ENCODE measurements at regions of chr19 and their contacts with region 1.

Region 1: GRCh38 chr19:10580979-10581631 is 6.0 kb downstream of the AP1M2 start:
- DNase-seq: no peak
- ATAC-seq: peak; percentile 96
- H3K4me3 ChIP-seq: no peak overlapping the region
- H3K27ac ChIP-seq: no peak overlapping the region
- H3K4me1 ChIP-seq: peaks cover 2% of the 10 kb centered on the region; the same call in 1 of the 2 replicates
- H3K27me3 ChIP-seq: no peaks in the 10 kb centered on the region; a peak in 1 of 4 replicates
- CTCF ChIP-seq: peak; percentile 99 to 100 (median 100); a peak in 5 of 6 replicates
- EP300 ChIP-seq: no peak
- POLR2A ChIP-seq: no peak
- RAD21 ChIP-seq: peak; percentile 99

Region 2: DNA sequence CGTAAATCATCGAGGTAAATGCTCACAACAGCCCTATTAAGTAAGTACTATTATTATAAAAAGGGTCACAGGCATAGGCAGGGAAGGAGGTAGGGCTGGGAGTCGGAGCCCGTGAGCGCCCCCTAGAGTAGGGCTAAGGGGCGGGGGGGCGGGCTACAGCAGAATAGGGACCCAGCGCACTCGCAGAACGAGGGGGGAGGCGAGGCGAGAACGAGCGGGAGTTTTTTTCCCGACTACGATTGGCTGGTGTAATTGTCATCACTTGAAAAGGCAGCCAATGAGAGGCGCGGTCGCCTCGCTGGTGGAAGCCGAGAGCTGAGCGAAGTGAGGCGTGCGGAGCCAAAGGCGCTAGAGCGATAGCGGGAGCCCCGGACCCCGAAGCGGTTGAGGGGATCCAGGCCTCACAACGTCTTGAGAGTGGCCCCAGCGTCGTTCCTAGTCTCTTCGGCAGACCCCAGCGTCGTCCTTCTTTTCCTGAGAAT is 102.2 kb before region 1 on chr19:
- CTCF ChIA-PET with region 1: interaction called, 12 read pairs
- POLR2A ChIA-PET with region 1: interaction called, 3 read pairs
- RAD21 ChIA-PET with region 1: interaction called, 3 read pairs
- SMC1A ChIA-PET with region 1: interaction called, 6 read pairs
- in situ Hi-C with region 1: no loop called
- intact Hi-C with region 1: no loop called
- DNase-seq: no peak
- ATAC-seq: peak; percentile 70
- H3K4me3 ChIP-seq: no peak overlapping the region
- H3K27ac ChIP-seq: no peak overlapping the region
- H3K4me1 ChIP-seq: no peaks in the 10 kb centered on the region
- H3K27me3 ChIP-seq: no peaks in the 10 kb centered on the region; a peak in 1 of 4 replicates
- CTCF ChIP-seq: peak; percentile 16 to 56 (median 27); a peak in 5 of 6 replicates
- EP300 ChIP-seq: no peak
- POLR2A ChIP-seq: no peak
- RAD21 ChIP-seq: peak; percentile 10; the same call in 1 of the 2 replicates

Region 3: DNA sequence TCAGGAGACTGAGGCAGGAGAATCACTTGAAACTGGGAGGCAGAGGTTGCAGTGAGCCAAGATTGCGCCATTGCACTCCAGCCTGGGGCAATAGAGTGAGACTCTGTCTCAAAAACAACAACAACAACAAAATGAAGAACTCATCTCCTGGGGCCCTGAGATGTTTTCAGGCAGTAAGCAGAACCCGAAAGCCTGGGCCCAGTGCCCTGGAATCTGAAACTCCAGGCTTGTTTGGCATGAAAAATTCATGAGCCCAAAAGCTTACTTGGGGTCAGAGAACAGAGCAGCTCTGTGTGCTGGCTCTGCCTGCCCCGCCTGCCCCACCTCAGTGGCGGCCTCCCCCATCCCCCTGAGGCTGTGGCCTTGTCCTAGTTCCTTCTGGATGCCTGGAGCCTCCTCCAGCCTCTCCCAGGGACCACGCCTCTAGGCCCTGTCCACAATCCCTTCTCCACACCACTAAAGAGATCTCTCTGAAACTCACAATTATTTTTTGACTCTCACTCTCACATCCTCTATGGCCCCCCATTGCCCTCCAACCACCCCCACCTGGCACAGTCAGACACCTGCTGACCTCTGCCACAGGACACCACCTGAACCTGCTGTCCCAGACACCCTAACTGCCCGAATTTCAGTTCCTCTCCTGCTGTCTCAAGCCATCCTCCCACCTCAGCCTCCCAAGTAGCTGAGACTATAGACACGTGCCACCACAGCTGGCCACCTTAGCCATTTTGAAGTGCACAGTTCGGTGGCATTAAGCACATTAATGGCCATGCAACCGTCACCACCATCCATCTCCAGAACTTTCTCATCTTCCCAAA is 12.9 kb after region 1 on chr19:
- CTCF ChIA-PET with region 1: interaction called, 27 read pairs
- POLR2A ChIA-PET with region 1: interaction called, 4 read pairs
- RAD21 ChIA-PET with region 1: interaction called, 18 read pairs
- SMC1A ChIA-PET with region 1: interaction called, 16 read pairs
- in situ Hi-C with region 1: no loop called
- intact Hi-C with region 1: no loop called
- DNase-seq: peak; percentile 72
- ATAC-seq: peak; percentile 84
- H3K4me3 ChIP-seq: no peak overlapping the region
- H3K27ac ChIP-seq: no peak overlapping the region
- H3K4me1 ChIP-seq: peaks cover 33% of the 10 kb centered on the region
- H3K27me3 ChIP-seq: no peaks in the 10 kb centered on the region
- CTCF ChIP-seq: no peak
- EP300 ChIP-seq: peak; percentile 38 to 41; a peak in 1 of 4 replicates
- POLR2A ChIP-seq: no peak
- RAD21 ChIP-seq: no peak

Region 4: DNA sequence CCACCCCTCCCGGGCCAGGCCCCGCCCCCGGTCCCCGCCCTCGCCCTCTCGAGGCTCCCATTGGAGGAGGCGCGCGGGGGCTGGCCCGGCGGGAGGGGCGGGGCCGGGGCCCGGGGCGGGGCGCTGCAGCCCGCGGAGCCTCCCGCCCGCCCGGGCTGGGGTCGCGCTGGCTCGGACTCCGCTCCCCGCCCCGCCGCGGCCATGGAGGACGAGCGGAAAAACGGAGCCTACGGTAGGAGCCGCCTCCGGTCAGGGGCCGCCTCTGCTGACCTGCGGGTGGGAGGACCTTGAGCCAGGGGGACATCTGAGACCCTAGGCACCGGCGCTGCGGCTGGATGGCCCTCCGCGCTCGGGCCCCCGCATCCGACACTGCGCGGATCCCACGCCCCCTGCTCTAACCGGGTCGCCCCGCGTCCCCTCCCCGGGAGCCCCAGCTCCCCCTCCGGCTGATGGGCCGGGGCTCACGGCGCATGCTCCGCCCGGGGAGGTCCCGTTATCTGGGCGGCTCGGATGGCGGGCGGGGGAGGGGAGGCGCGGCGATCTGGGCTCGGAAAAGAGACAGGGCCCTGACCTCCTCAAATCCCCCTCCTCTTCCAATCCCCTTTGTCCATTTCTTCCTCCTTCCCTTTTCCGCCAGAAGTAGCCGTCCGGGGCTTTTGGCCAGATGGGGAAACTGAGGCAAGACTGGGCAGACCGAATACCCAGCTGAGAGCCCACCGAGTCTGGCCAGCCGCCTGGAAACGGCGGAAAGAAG is 21.4 kb after region 1 on chr19:
- CTCF ChIA-PET with region 1: interaction called, 57 read pairs
- POLR2A ChIA-PET with region 1: interaction called, 3 read pairs
- RAD21 ChIA-PET with region 1: interaction called, 50 read pairs
- SMC1A ChIA-PET with region 1: interaction called, 16 read pairs
- in situ Hi-C with region 1: no loop called
- intact Hi-C with region 1: no loop called
- DNase-seq: no peak
- ATAC-seq: peak; percentile 81
- H3K4me3 ChIP-seq: peak overlapping the region; percentile 98
- H3K27ac ChIP-seq: peak overlapping the region; percentile 98
- H3K4me1 ChIP-seq: peaks cover 20% of the 10 kb centered on the region
- H3K27me3 ChIP-seq: no peaks in the 10 kb centered on the region
- CTCF ChIP-seq: no peak
- EP300 ChIP-seq: no peak
- POLR2A ChIP-seq: peak; percentile 73
- RAD21 ChIP-seq: no peak

Region 5: GRCh38 chr19:10612491-10613119 is 31.5 kb after region 1 on chr19:
- CTCF ChIA-PET with region 1: interaction called, 17 read pairs
- POLR2A ChIA-PET with region 1: interaction called, 5 read pairs
- RAD21 ChIA-PET with region 1: interaction called, 4 read pairs
- SMC1A ChIA-PET with region 1: interaction called, 6 read pairs
- in situ Hi-C with region 1: no loop called
- intact Hi-C with region 1: no loop called
- DNase-seq: no peak
- ATAC-seq: no peak
- H3K4me3 ChIP-seq: no peak overlapping the region
- H3K27ac ChIP-seq: no peak overlapping the region
- H3K4me1 ChIP-seq: no peaks in the 10 kb centered on the region
- H3K27me3 ChIP-seq: no peaks in the 10 kb centered on the region
- CTCF ChIP-seq: no peak
- EP300 ChIP-seq: no peak
- POLR2A ChIP-seq: no peak
- RAD21 ChIP-seq: no peak

Region 6: DNA sequence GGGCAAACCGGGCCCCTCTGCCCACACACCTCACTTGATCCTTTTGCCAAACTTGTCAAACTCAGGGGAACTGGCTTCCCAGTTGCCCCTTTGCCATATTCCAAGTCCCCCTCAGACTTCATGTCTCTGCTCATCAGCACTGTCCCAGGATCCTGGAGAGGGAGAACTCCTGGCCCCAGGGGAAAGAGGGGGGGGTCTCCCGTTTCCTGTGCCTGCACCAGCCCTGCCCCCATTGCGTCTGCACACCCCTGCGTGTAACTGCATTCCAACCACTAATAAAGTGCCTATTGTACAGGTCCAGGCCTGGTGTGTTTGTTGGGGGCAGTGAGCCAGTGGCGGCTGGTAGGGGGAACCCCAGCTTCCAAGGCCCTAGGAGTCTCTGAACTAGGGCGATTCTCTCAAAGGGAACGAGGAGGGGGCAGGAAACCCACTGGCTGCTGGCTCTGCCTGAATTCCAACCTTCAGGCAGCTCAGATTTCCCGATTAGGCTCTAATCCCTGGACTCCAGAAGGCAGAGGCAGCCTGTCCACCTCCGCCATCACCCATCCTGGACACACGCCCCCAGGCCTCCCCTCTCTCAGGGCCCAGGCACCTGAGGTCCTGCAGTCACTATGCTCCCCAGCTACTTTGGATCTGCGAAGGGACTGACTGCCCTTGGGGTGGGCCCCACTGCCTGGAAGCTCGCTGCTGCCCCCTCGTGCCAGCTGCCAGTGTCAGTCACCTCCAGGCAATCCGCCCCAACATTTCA is 63.3 kb after region 1 on chr19:
- CTCF ChIA-PET with region 1: interaction called, 397 read pairs
- POLR2A ChIA-PET with region 1: interaction called, 24 read pairs
- RAD21 ChIA-PET with region 1: interaction called, 250 read pairs
- SMC1A ChIA-PET with region 1: interaction called, 252 read pairs
- in situ Hi-C with region 1: loop called (anchors 5 kb)
- intact Hi-C with region 1: loop called (anchors 1 kb)
- DNase-seq: no peak
- ATAC-seq: peak; percentile 91
- H3K4me3 ChIP-seq: no peak overlapping the region
- H3K27ac ChIP-seq: no peak overlapping the region
- H3K4me1 ChIP-seq: peaks cover 2% of the 10 kb centered on the region
- H3K27me3 ChIP-seq: no peaks in the 10 kb centered on the region
- CTCF ChIP-seq: peak; percentile 91 to 95 (median 93)
- EP300 ChIP-seq: no peak
- POLR2A ChIP-seq: no peak
- RAD21 ChIP-seq: peak; percentile 89

Region 7: DNA sequence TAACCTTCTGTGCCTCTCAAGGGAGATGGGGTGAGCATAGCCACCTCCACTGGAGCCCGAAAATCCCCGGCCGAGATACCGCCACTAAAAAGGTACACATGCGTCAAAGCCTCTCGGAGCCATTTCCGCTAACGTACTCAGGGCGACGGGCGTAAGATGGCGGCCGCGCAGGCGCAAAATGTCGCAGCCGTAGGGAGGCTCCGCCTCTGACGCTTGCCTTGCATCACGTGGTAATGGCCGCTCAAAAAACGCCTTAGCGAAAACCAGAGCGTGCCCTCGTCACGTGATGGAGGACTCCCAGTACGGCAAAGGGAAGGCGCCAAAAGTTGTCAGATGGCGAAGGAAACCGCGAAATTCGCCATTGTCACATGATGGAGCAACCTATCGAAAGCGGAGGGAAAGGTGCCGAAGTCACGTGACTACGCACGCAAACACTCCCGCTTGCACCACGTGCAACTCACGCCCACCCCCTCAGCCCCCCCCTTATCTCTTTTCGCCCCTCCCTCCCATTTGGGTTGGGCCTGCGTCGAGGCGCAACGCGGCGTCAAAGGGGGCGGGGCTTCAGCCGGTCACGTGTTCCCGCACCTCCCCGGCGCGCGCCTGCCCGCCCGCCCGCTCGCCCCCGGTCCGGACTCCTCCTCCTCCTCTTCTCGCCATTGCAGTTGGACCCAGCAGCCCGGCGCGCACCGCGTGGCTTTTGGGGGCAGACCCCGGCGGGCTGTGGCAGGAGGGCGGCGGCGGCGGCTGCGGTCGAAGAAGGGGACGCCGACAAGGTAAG is 72.8 kb after region 1 on chr19 and contains the start of gene ILF3:
- CTCF ChIA-PET with region 1: interaction called, 397 read pairs
- POLR2A ChIA-PET with region 1: interaction called, 7 read pairs
- RAD21 ChIA-PET with region 1: interaction called, 250 read pairs
- SMC1A ChIA-PET with region 1: interaction called, 252 read pairs
- in situ Hi-C with region 1: no loop called
- intact Hi-C with region 1: no loop called
- DNase-seq: peak; percentile 100
- ATAC-seq: peak; percentile 83
- H3K4me3 ChIP-seq: peak within 1 kb of the TSS; percentile 91
- H3K27ac ChIP-seq: peak within 1 kb of the TSS; percentile 99
- H3K4me1 ChIP-seq: peaks cover 6% of the 10 kb centered on the region
- H3K27me3 ChIP-seq: no peaks in the 10 kb centered on the region
- CTCF ChIP-seq: no peak
- EP300 ChIP-seq: peak; percentile 52 to 54
- POLR2A ChIP-seq: peak; percentile 89
- RAD21 ChIP-seq: no peak
- polyA plus RNA-seq, gene ILF3: 28.1 to 38.1 TPM